Aorta (tissue), 5 donors: ENCODE measurements at regions of chr1 and their contacts with region 1.

Region 1: DNA sequence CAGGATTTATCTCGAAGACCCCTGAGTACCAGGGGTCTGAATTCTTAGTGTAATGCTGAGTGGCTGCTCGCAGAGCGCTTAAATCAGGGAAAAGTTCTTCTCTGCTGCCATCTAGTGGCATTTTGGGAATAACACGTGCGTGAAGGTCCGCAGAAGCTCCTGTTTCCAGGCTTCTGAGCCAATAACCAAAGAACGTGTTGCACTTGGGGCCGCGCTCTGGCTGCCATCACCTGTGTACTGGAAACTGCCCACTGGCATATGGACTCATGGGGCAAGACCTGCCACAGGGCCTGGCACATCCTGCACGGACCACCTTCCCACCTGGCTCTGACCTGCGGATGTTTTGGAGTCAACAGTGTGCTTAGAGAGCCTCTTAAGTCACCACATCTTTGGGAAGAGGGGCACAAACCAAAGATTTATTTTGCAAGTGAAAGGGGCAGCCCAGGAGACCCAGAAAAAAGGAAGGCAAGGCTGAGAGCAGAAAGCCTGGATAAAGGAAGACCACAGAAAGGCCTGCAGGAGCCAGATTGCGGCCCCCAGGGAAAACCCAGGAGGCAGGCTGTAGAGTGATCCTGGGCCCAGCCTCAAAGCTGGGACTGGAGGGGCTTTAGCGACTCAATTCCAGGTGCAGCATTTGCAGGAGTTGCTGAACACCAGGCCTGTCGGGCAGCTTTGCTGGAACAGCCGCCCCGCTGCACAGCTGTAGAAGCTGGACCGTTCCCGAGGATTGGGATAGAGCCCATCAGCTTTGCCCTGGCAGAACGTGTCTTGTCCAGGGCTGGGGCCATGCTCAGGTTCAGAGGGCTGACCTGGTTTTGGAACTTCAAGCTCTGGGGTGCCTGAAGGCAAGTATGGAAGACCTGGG is 13.0 kb downstream of the CHIT1 start:
- DNase-seq: no peak
- ATAC-seq: peak; percentile 71
- H3K4me3 ChIP-seq: no peak overlapping the region
- H3K27ac ChIP-seq: no peak overlapping the region
- H3K4me1 ChIP-seq: no peaks in the 10 kb centered on the region
- H3K27me3 ChIP-seq: no peaks in the 10 kb centered on the region

Region 2: DNA sequence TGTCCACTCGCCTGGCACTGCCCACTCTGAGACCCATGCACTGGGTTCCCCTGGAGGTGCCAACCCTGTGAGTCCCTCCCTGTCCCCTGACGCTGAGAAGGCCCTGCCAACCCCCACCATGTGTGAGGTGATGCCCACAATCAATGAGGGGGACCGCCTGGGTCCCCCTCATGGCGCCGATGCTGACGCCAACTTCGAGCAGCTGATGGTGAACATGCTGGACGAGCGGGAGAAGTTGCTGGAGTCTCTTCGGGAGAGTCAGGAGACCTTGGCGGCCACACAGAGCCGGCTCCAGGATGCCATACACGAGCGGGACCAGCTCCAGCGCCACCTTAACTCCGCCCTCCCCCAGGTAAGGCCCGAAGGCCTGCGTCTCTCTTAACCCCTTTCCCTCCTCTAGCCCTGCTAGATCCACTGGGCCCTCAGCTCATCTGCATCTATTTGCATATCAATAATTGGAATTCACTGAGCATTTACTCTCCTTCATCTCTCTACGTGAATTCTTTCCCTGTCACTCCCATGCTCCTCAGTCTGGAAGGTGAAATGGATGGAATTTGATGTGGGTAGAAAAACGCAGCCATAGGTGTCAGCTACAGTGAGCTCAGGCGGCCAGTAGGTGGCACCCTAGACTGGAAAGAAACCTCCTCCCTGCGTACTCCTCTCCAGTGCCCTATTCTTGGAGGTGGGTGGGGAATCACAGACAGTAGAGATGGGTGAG is 177.5 kb before region 1 on chr1:
- intact Hi-C with region 1: loop called (anchors 1 to 2 kb)
- DNase-seq: peak; percentile 78 to 90
- ATAC-seq: peak; percentile 85
- H3K4me3 ChIP-seq: no peak overlapping the region
- H3K27ac ChIP-seq: peak overlapping the region in 1 of 2 donors; percentile 73
- H3K4me1 ChIP-seq: no peaks in the 10 kb centered on the region
- H3K27me3 ChIP-seq: no peaks in the 10 kb centered on the region

Region 3: GRCh38 chr1:203117611-203118575 is 98.6 kb before region 1 on chr1:
- intact Hi-C with region 1: loop called (anchors 1 to 5 kb)
- DNase-seq: peak; percentile 77 to 92
- ATAC-seq: peak; percentile 88
- H3K4me3 ChIP-seq: no peak overlapping the region
- H3K27ac ChIP-seq: no peak overlapping the region
- H3K4me1 ChIP-seq: no peaks in the 10 kb centered on the region
- H3K27me3 ChIP-seq: no peaks in the 10 kb centered on the region

Region 4: DNA sequence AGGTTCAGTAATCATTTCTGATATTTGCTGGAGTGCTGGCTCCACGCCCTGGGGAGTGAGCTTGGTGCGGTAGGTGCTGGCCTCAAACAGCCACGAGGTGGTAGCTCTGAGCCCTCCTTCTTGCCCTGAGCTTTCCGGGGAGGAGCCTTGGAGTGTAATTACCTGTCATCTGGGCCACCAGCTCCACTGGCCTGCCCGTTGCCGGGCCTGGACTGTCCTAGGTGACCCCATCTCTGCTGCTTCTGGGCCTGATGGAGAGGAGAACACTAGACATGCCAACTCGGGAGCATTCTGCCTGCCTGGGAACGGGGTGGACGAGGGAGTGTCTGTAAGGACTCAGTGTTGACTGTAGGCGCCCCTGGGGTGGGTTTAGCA is 50.0 kb before region 1 on chr1:
- intact Hi-C with region 1: loop called in 1 of 2 experiments (anchors 10 kb)
- DNase-seq: no peak
- ATAC-seq: peak; percentile 26
- H3K4me3 ChIP-seq: no peak overlapping the region
- H3K27ac ChIP-seq: no peak overlapping the region
- H3K4me1 ChIP-seq: no peaks in the 10 kb centered on the region
- H3K27me3 ChIP-seq: no peaks in the 10 kb centered on the region

Region 5: DNA sequence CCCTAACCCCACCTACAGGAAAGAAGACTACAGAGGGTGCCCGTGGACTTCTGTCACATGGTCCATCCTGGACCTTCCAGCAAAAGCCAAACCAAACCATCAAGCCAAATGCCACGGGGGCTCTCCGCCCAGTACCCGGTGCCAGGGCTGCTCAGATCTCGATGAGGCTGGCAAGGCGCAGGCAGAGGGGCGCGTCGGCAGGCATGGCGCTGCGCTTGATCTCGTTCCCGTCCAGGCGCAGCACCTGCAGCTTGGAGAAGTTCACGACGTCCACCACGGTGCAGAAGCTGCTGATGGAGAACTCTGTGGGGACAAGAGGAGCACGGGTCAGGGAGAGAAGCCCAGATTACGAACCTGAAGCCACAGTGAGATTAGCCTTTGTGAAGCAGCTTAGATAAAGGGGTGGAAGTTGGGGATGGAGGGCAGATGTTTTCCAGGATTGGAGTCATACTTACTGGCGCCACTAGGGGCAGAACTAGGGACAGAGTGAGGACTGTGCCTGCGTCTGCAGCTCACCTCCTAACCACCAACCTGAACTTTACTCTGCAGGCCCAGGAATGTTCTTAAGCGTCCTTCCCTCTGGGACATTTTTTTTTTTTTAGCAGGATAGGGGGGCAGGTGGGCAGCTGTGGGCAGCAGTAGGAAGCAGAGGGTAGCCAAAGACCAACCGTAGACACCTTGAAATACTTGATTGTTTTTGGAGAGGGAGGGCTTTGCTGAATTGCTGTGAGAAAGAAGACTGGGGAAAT is 125.9 kb after region 1 on chr1:
- intact Hi-C with region 1: no loop called
- DNase-seq: no peak
- ATAC-seq: peak; percentile 71
- H3K4me3 ChIP-seq: no peak overlapping the region
- H3K27ac ChIP-seq: no peak overlapping the region
- H3K4me1 ChIP-seq: no peaks in the 10 kb centered on the region
- H3K27me3 ChIP-seq: no peaks in the 10 kb centered on the region